OCI-LY7 (cell line): ENCODE measurements at regions of chr5 and their contacts with region 1.

Region 1: DNA sequence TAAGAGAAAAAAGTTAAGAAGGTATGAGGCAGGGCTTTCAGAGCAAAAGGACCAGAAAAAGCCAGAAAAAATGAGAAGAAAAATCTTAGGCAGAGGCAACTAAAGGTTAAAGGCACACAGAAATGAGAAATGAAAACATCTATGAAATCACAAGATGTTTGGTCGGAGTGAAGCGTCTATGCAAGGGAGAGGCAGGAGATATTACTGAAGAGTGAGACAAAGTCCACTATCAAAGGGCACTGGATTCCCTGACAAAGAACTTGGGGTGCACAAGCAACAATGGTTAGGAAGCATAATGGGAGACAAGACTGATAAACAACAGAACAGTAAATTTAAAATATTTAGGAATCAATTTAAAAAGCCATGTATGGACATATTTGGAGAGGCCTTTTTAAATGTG is 16.9 kb downstream of the PANK3 start:
- DNase-seq: no peak
- H3K4me3 ChIP-seq: no peak overlapping the region
- H3K27ac ChIP-seq: no peak overlapping the region
- H3K4me1 ChIP-seq: no peaks in the 10 kb centered on the region
- CTCF ChIP-seq: no peak

Region 2: GRCh38 chr5:168494057-168494555 is 68.2 kb before region 1 on chr5:
- CTCF ChIA-PET with region 1: no interaction called
- POLR2A ChIA-PET with region 1: interaction called, 3 read pairs
- intact Hi-C with region 1: loop called (anchors 5 kb)
- DNase-seq: no peak
- H3K4me3 ChIP-seq: no peak overlapping the region
- H3K27ac ChIP-seq: no peak overlapping the region
- H3K4me1 ChIP-seq: no peaks in the 10 kb centered on the region
- CTCF ChIP-seq: no peak